Activated T-helper 2 cell treated with anti-CD3 and anti-CD28 coated beads, Interferon-gamma antibody, Interleukin-2, Interleukin-4, amounts not matched to agents 10 μg/mL and 5 μg/mL and 100 μg/mL, durations not matched to agents 14 hours and 24 hours and 36 hours (primary cell): ENCODE measurements at regions of chr6 and their contacts with region 1.

Region 1: DNA sequence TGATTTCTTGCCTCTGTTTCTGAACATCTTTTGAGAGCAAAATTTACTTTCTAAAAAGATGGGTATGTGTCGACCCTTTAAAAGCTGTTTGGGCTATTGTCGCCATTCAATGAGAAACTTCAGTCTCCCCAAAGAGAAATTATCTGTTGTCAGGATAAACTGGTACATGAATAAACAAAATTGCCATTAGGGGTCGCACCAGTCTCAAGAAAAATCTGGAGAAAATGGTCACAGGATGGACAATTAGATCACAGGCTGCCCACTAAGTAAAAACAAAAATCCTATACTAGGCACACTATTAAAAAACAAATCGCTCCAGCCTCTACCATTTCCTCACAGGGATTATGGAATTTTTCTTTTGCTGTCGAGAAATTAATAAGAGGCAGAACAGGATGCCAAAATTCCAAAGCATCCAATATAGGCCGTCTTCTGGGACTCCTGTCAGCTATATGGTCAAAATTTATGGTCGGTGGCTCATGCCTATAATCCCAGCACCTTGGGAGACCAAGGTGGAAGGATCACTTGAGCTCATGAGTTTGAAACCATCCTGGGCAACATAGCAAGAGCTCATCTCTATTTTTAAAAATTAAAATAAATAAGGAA is 5.5 kb upstream of the HLA-E start:
- DNase-seq: no peak
- H3K4me3 Mint-ChIP-seq: no peak overlapping the region
- H3K27ac Mint-ChIP-seq: no peak overlapping the region
- H3K4me1 Mint-ChIP-seq: peaks cover 30% of the 10 kb centered on the region
- H3K27me3 Mint-ChIP-seq: peaks cover 43% of the 10 kb centered on the region

Region 2: DNA sequence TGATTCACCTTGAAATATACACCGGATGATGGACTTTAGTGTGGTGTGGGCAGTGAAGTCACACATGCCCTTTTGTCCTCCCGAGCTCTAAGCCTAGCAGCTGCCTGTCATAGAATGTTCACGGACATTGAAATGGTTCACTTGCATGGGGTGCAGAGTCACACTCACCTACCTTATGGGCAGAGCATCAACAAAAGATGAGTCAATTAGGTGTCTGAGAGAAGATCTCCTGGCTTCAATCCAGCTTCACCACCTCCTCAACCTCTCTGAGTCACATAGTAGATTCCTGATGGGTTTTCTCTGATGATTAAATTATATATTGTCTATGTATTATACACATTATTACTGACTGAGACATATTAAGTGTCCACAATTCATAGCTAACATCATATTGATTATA is 42.6 kb before region 1 on chr6:
- intact Hi-C with region 1: no loop called
- DNase-seq: no peak
- H3K4me3 Mint-ChIP-seq: no peak overlapping the region
- H3K27ac Mint-ChIP-seq: no peak overlapping the region
- H3K4me1 Mint-ChIP-seq: peaks cover 2% of the 10 kb centered on the region
- H3K27me3 Mint-ChIP-seq: peaks cover 84% of the 10 kb centered on the region

Region 3: DNA sequence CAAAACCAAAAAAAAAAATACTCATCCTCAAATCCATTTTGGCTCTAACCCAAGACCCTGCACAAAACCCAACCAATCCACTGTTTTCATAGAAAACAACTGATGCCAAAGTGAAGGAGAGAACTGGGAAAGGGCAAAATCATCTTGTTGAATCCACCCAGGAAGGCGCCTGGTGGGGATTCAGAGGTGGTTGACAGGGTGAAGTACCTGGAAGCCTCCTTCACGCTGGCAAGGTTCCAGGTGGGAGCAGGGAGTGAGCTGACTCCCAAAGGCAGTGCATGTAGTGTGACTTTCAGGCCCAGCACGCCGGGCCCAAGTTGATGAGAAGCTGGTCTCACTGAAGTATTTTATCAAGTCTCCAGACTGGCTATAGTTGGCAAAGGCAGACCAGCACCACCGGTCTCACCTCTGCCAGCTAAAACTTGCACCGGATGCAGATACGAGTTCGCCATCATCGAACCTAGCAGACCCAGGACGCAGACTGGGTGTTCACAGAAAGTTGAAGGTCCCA is 116.7 kb after region 1 on chr6:
- intact Hi-C with region 1: loop called (anchors 1 kb)
- DNase-seq: no peak
- H3K4me3 Mint-ChIP-seq: no peak overlapping the region
- H3K27ac Mint-ChIP-seq: no peak overlapping the region
- H3K4me1 Mint-ChIP-seq: peaks cover 2% of the 10 kb centered on the region
- H3K27me3 Mint-ChIP-seq: no peaks in the 10 kb centered on the region

Region 4: GRCh38 chr6:30857549-30857948 is 373.8 kb after region 1 on chr6:
- intact Hi-C with region 1: no loop called
- DNase-seq: no peak
- H3K4me3 Mint-ChIP-seq: no peak overlapping the region
- H3K27ac Mint-ChIP-seq: no peak overlapping the region
- H3K4me1 Mint-ChIP-seq: no peaks in the 10 kb centered on the region
- H3K27me3 Mint-ChIP-seq: peaks cover 8% of the 10 kb centered on the region

Region 5: GRCh38 chr6:30876039-30876730 is 392.4 kb after region 1 on chr6:
- intact Hi-C with region 1: no loop called
- DNase-seq: no peak
- H3K4me3 Mint-ChIP-seq: no peak overlapping the region
- H3K27ac Mint-ChIP-seq: peak overlapping the region; percentile 34
- H3K4me1 Mint-ChIP-seq: peaks cover 25% of the 10 kb centered on the region
- H3K27me3 Mint-ChIP-seq: no peaks in the 10 kb centered on the region